Caco-2 (cell line): ENCODE measurements at regions of chr14 and their contacts with region 1.

Region 1: GRCh38 chr14:93234798-93235197 is 27.7 kb downstream of the UBR7 start:
- DNase-seq: no peak
- H3K4me3 ChIP-seq: no peak overlapping the region
- H3K4me3 Mint-ChIP-seq: no peak overlapping the region
- H3K27ac Mint-ChIP-seq: no peak overlapping the region
- H3K4me1 ChIP-seq: no peaks in the 10 kb centered on the region
- H3K4me1 Mint-ChIP-seq: no peaks in the 10 kb centered on the region
- H3K27me3 ChIP-seq: no peaks in the 10 kb centered on the region
- H3K27me3 Mint-ChIP-seq: no peaks in the 10 kb centered on the region
- CTCF ChIP-seq: no peak

Region 2: DNA sequence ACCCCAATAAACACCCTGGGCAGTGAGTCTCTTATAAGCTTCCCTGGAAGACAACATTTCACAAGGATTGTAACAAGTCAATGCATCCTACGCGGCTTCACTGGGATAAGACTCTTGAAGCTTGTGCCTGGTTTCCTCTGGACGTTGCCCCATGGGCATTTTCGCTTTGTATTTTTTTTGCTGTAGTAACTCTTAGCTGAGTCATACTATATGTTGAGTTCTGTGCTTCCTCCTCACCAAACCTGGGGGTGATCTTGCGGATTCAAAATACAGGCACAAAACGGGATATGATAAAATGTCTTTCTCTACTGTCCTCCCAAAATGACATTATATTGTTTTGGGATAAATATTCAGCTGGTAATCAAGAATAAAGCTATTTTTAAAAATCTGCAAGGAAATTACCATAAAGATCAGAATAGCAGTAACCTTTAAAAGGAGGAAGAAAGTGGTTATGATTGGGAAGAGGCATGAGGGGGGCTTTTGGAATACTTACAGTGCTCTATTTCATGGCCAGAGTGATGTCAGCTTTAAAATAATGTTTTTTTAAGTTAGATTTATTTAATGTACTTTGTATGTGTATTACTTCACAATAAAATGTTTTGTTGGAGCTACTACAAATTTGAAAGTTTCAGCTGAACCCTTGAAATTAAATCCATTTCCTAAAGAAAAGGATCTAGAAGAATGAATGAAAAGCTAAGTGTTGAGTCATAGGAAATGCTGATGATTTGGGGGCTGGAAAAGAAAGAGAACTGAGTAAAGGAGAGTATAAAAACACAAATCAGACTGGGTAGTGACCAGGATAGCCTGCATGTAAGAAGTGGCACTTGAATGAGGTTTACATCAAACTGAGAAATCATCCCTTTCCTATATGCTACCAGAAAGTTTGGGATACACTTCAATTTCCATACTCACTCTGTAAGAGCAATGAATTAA is 83.3 kb after region 1 on chr14:
- CTCF ChIA-PET with region 1: no interaction called
- POLR2A ChIA-PET with region 1: no interaction called
- intact Hi-C with region 1: no loop called
- DNase-seq: no peak
- H3K4me3 ChIP-seq: no peak overlapping the region
- H3K4me3 Mint-ChIP-seq: no peak overlapping the region
- H3K27ac Mint-ChIP-seq: no peak overlapping the region
- H3K4me1 ChIP-seq: no peaks in the 10 kb centered on the region; the same call in none of the 2 replicates
- H3K4me1 Mint-ChIP-seq: peaks cover 10% of the 10 kb centered on the region
- H3K27me3 ChIP-seq: no peaks in the 10 kb centered on the region
- H3K27me3 Mint-ChIP-seq: no peaks in the 10 kb centered on the region
- CTCF ChIP-seq: no peak

Region 3: DNA sequence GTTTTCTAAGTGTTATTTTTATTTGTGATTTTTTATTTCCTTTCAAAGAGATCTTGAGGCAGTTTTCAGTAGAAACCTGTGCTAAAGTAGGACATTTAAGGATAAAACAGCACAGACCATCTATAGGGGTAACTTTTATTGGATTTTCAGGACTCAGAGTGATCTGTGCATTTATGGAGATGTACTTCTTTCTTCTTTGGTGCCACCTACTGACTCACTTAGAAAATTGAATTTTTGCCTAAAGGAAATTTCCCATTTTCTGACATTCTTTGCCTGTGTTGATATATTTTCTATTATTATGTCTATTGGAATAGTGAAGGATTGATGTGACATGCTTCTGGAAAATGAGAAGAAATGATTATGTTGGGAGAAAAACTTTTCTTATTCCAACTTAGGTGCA is 309.0 kb after region 1 on chr14:
- CTCF ChIA-PET with region 1: no interaction called
- POLR2A ChIA-PET with region 1: no interaction called
- intact Hi-C with region 1: loop called (anchors 1 kb)
- DNase-seq: peak in 1 of 2 experiments; percentile 13
- H3K4me3 ChIP-seq: no peak overlapping the region
- H3K4me3 Mint-ChIP-seq: no peak overlapping the region
- H3K27ac Mint-ChIP-seq: no peak overlapping the region
- H3K4me1 ChIP-seq: no peaks in the 10 kb centered on the region
- H3K4me1 Mint-ChIP-seq: no peaks in the 10 kb centered on the region
- H3K27me3 ChIP-seq: no peaks in the 10 kb centered on the region
- H3K27me3 Mint-ChIP-seq: peaks cover 11% of the 10 kb centered on the region
- CTCF ChIP-seq: peak; percentile 45 to 54

Region 4: GRCh38 chr14:93619176-93619793 is 384.5 kb after region 1 on chr14:
- CTCF ChIA-PET with region 1: no interaction called
- POLR2A ChIA-PET with region 1: no interaction called
- intact Hi-C with region 1: loop called (anchors 1 kb)
- DNase-seq: peak; percentile 37 to 45
- H3K4me3 ChIP-seq: no peak overlapping the region
- H3K4me3 Mint-ChIP-seq: no peak overlapping the region
- H3K27ac Mint-ChIP-seq: no peak overlapping the region
- H3K4me1 ChIP-seq: no peaks in the 10 kb centered on the region
- H3K4me1 Mint-ChIP-seq: no peaks in the 10 kb centered on the region
- H3K27me3 ChIP-seq: 0 out of 2 replicates have a peak, but pooled peaks cover 1% of the 10 kb centered on the region
- H3K27me3 Mint-ChIP-seq: peaks cover 9% of the 10 kb centered on the region
- CTCF ChIP-seq: peak; percentile 40 to 66

Region 5: GRCh38 chr14:93629643-93630042 is 394.8 kb after region 1 on chr14:
- CTCF ChIA-PET with region 1: no interaction called
- POLR2A ChIA-PET with region 1: no interaction called
- intact Hi-C with region 1: no loop called
- DNase-seq: no peak
- H3K4me3 ChIP-seq: no peak overlapping the region
- H3K4me3 Mint-ChIP-seq: no peak overlapping the region
- H3K27ac Mint-ChIP-seq: no peak overlapping the region
- H3K4me1 ChIP-seq: no peaks in the 10 kb centered on the region
- H3K4me1 Mint-ChIP-seq: no peaks in the 10 kb centered on the region
- H3K27me3 ChIP-seq: no peaks in the 10 kb centered on the region; the same call in 1 of the 2 replicates
- H3K27me3 Mint-ChIP-seq: peaks cover 32% of the 10 kb centered on the region
- CTCF ChIP-seq: no peak